ENCODE measurements at regions of chr2 and their contacts with region 1.

Region 1: DNA sequence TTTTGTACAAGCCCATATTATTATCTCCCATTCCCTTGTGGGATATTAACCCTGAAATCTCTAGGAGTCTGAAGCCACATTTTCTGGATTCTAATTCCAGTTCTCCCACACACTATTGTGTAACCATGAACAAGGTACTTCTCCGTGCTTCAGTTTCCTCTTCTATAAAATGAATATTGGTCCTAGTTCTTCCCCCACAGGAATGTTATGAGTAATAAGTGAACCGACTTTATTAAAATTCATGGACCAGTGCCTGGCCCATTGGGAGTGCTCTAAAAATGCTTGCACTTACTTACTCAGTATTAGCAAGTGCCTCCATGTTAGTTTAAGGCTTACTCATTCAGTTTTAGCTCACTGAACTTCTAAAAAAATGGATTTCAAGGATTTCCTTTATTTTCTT is 1.4 kb upstream of the ACMSD start:
- DNase-seq: peak; percentile 57 to 63
- H3K4me3 ChIP-seq: no peak overlapping the region
- H3K27ac ChIP-seq: peak overlapping the region; percentile 57 to 70 (median 64)
- H3K4me1 ChIP-seq: peaks cover 17 to 29% of the 10 kb centered on the region in 2 donors
- H3K27me3 ChIP-seq: no peaks in the 10 kb centered on the region
- CTCF ChIP-seq: no peak
- POLR2A ChIP-seq: no peak

Region 2: GRCh38 chr2:134900151-134900550 is 63.2 kb after region 1 on chr2:
- intact Hi-C with region 1: loop called (anchors 10 kb)
- DNase-seq: no peak
- H3K4me3 ChIP-seq: no peak overlapping the region
- H3K27ac ChIP-seq: no peak overlapping the region
- H3K4me1 ChIP-seq: peaks cover 8 to 12% of the 10 kb centered on the region in 2 donors
- H3K27me3 ChIP-seq: no peaks in the 10 kb centered on the region
- CTCF ChIP-seq: no peak
- POLR2A ChIP-seq: no peak

Region 3: GRCh38 chr2:135121016-135121657 is 284.2 kb after region 1 on chr2:
- intact Hi-C with region 1: no loop called
- DNase-seq: no peak
- H3K4me3 ChIP-seq: no peak overlapping the region
- H3K27ac ChIP-seq: no peak overlapping the region
- H3K4me1 ChIP-seq: no peaks in the 10 kb centered on the region
- H3K27me3 ChIP-seq: no peaks in the 10 kb centered on the region
- CTCF ChIP-seq: no peak
- POLR2A ChIP-seq: no peak

Measured in thyroid gland (tissue), 4 donors.